Activated CD4-positive, alpha-beta T cell treated with anti-CD3 and anti-CD28 coated beads for 36 hours (primary cell): ENCODE measurements at regions of chr4 and their contacts with region 1.

Region 1: GRCh38 chr4:146638801-146639605 is at the start of gene POU4F2:
- DNase-seq: peak; percentile 53
- ATAC-seq: peak; percentile 59
- H3K4me3 Mint-ChIP-seq: peak within 1 kb of the TSS; percentile 26
- H3K27ac Mint-ChIP-seq: no peak within 1 kb of the TSS
- H3K4me1 Mint-ChIP-seq: peaks cover 22% of the 10 kb centered on the region
- H3K27me3 Mint-ChIP-seq: peaks cover 75% of the 10 kb centered on the region
- total RNA-seq, gene POU4F2: not detected

Region 2: DNA sequence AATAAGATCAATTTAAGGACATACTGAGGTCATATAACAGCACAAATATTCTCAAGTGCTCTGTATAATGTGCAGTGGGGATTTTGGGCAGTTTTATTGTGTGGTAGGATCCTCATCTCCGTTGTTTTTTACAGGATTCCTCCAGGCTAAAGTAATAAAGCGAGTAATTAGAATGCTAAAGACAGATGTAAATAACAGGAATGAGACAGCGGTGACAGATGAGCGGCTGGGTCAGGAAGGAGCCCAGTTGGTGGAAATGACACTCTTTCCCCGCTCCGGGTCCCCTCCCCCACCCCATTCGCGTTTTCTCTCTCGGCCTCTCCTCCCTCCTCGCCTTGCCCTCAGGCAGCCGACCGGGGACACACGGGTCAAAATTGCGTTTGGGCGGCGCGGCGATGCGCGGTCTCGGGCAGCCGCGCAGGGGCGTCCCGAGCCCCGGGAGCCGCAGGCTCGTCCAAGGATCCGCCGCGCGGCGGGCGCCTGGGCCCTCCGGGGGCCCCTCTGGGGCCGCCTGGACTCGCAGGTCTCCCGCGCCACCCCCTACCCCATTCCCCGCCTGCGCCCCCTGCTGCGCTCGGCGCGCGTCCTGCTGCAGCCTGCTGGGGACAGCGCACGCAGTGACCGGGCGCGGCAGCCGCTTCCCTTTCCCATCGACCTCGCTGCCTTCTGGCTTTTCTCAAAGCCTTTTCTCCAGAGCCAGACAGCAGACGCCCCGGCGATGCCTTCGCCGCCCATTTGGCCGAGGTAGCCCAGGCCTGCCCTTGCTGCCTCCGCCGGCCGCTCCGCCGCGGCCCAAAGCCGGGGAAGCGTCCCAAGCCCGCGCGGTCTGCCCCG is 15.9 kb after region 1 on chr4:
- CTCF ChIA-PET with region 1: interaction called, 7 read pairs
- POLR2A ChIA-PET with region 1: no interaction called
- intact Hi-C with region 1: loop called in 1 of 2 experiments (anchors 2 kb)
- DNase-seq: peak; percentile 30
- ATAC-seq: peak; percentile 30
- H3K4me3 Mint-ChIP-seq: peak overlapping the region; percentile 20
- H3K27ac Mint-ChIP-seq: no peak overlapping the region
- H3K4me1 Mint-ChIP-seq: peaks cover 11% of the 10 kb centered on the region
- H3K27me3 Mint-ChIP-seq: peaks cover 62% of the 10 kb centered on the region